ENCODE measurements at regions of chr7 and their contacts with region 1.

Region 1: DNA sequence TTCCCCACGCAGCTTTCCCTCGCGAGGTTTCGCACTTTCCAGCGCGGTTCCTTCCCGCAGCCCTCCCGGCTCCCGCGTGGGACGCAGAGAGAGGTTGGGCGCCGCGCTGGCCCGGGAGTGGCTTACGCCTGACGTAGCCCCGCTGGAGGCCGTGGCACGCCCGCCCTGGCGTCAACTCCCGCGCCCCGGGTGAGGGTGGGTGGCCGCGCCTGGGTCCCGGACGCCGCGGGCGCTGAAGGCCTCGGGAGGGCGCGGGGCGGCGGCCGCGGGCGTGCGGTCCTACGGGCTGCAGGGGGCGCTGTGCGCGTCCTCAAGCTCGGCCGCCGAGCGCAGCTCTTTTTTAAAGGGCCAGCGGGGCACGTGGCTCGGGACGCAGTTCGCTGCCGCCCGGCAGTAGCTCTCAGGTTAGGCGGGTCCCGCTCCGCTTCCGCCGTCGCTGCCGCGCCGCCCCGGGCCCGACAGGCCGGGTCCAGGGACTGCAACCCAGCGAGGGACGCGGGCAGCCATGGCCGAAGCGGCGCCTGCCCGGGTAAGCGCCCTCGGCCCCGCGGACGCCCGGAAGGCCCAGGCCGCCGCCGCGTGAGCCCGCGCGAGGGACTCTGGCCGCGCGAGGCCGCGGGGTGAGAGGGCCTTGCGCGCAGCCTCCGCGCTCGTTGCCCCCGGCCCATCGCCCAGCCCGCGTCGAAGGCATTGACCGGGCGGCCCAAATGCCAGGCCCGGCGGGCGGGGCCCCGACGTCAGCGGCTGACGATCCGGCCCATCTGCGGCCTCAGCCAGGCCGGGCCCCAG is at the start of gene ZNF783:
- DNase-seq: peak; percentile 83
- H3K4me3 ChIP-seq: peak within 1 kb of the TSS; percentile 53 to 65
- H3K27ac ChIP-seq: peak within 1 kb of the TSS; percentile 91 to 92
- H3K4me1 ChIP-seq: no peaks in the 10 kb centered on the region
- H3K27me3 ChIP-seq: no peaks in the 10 kb centered on the region
- CTCF ChIP-seq: peak; percentile 78 to 93 (median 89)
- POLR2A ChIP-seq: peak; percentile 22
- total RNA-seq, gene ZNF783: 10.7 to 20.7 TPM

Region 2: GRCh38 chr7:149497456-149498261 is 235.6 kb after region 1 on chr7 and contains the start of gene ZNF746:
- intact Hi-C with region 1: loop called (anchors 10 kb)
- DNase-seq: peak; percentile 72
- H3K4me3 ChIP-seq: peak within 1 kb of the TSS; percentile 66 to 84
- H3K27ac ChIP-seq: peak within 1 kb of the TSS; percentile 78 to 87
- H3K4me1 ChIP-seq: peaks cover 6% of the 10 kb centered on the region
- H3K27me3 ChIP-seq: no peaks in the 10 kb centered on the region
- CTCF ChIP-seq: peak in 3 of 4 experiments; percentile 34 to 81 (median 77)
- POLR2A ChIP-seq: no peak
- total RNA-seq, gene ZNF746: 21.0 to 40.0 TPM

Measured in prostate gland (tissue), 2 donors.